CD8-positive, alpha-beta T cell (primary cell): ENCODE measurements at regions of chr1 and their contacts with region 1.

Region 1: DNA sequence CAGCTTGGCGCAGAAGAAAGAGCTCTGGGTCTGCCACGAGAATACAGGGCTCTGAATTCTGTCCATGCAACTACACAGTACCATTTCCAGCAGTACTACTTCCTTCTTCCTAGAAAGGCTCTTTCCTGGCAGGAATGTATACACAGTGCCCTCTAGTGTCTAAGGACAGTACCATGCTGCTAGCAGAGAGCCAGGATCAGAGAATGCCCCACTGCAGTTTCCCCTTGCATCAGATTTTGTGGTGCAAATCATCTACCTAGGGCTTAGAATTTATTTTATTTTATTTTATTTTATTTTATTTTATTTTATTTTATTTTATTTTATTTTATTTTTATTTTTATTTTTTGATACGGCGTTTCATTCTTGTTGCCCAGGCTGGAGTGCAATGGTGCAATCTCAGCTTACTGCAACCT is 50.8 kb downstream of the PAX7 start:
- DNase-seq: peak in 3 of 9 experiments; percentile 16 to 53 (median 17)
- ATAC-seq: no peak
- H3K4me3 ChIP-seq: no peak overlapping the region
- H3K4me3 Mint-ChIP-seq: no peak overlapping the region
- H3K27ac ChIP-seq: no peak overlapping the region
- H3K27ac Mint-ChIP-seq: no peak overlapping the region
- H3K4me1 ChIP-seq: no peaks in the 10 kb centered on the region
- H3K4me1 Mint-ChIP-seq: peaks cover 7% of the 10 kb centered on the region
- H3K27me3 ChIP-seq: peaks cover 0 to 2% of the 10 kb centered on the region in 2 experiments
- H3K27me3 Mint-ChIP-seq: peaks cover 15% of the 10 kb centered on the region
- CTCF ChIP-seq: peak; percentile 62

Region 2: DNA sequence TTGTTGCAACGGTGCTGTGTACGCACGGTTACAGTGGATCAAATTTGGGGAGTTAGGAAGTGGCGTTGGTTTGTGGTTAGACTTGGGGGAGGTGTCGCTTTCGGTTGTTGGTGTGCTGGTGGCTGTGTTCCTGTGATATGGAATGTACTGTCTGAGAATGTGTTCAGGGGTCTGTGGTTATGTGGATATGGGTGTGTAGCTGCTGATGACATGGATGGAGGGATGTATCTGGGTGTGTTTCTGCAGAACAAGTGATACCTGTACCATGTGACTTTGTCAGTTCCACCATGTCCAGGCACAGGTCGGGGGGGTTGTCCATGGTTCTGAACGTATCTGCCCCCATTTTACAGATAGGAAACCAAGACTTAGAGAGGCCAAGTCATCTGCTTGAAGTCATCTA is 28.1 kb before region 1 on chr1:
- CTCF ChIA-PET with region 1: interaction called, 12 read pairs
- POLR2A ChIA-PET with region 1: no interaction called
- intact Hi-C with region 1: no loop called
- DNase-seq: peak in 1 of 9 experiments; percentile 30
- ATAC-seq: peak; percentile 37
- H3K4me3 ChIP-seq: peak overlapping the region in 1 of 2 experiments; percentile 26
- H3K4me3 Mint-ChIP-seq: peak overlapping the region; percentile 64
- H3K27ac ChIP-seq: no peak overlapping the region
- H3K27ac Mint-ChIP-seq: no peak overlapping the region
- H3K4me1 ChIP-seq: peaks cover 53% of the 10 kb centered on the region
- H3K4me1 Mint-ChIP-seq: peaks cover 70% of the 10 kb centered on the region
- H3K27me3 ChIP-seq: peaks cover 4 to 6% of the 10 kb centered on the region in 2 experiments
- H3K27me3 Mint-ChIP-seq: peaks cover 18% of the 10 kb centered on the region
- CTCF ChIP-seq: no peak

Region 3: DNA sequence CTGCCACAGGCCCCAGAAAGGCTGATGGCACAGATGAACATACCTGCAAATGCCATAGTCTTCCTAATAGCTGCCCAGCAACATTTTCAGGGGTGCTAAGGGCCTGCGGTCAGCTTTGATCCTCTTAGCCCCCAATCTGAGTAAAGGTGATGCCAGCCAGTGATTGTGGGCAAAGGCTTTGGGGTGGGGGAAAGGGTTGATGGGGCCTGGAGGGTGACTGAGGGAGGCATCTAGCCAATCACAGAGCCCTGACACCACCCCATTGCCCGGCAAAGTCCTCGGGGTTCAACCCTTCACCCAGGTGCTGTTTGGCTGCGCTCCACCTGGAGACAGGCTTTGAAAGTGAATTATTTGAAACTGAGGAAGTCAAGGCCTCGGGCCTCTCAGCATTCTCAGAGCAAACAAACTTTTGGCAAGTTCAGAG is 15.0 kb before region 1 on chr1:
- CTCF ChIA-PET with region 1: interaction called, 18 read pairs
- POLR2A ChIA-PET with region 1: no interaction called
- intact Hi-C with region 1: no loop called
- DNase-seq: no peak
- ATAC-seq: no peak
- H3K4me3 ChIP-seq: no peak overlapping the region
- H3K4me3 Mint-ChIP-seq: peak overlapping the region; percentile 37
- H3K27ac ChIP-seq: no peak overlapping the region
- H3K27ac Mint-ChIP-seq: peak overlapping the region; percentile 22
- H3K4me1 ChIP-seq: peaks cover 17% of the 10 kb centered on the region
- H3K4me1 Mint-ChIP-seq: peaks cover 24% of the 10 kb centered on the region
- H3K27me3 ChIP-seq: peaks cover 0 to 4% of the 10 kb centered on the region in 2 experiments
- H3K27me3 Mint-ChIP-seq: no peaks in the 10 kb centered on the region
- CTCF ChIP-seq: no peak

Region 4: GRCh38 chr1:18783705-18784481 is 102.5 kb after region 1 on chr1:
- CTCF ChIA-PET with region 1: no interaction called
- POLR2A ChIA-PET with region 1: no interaction called
- intact Hi-C with region 1: no loop called
- DNase-seq: no peak
- ATAC-seq: no peak
- H3K4me3 ChIP-seq: no peak overlapping the region
- H3K4me3 Mint-ChIP-seq: no peak overlapping the region
- H3K27ac ChIP-seq: no peak overlapping the region
- H3K27ac Mint-ChIP-seq: no peak overlapping the region
- H3K4me1 ChIP-seq: no peaks in the 10 kb centered on the region
- H3K4me1 Mint-ChIP-seq: no peaks in the 10 kb centered on the region
- H3K27me3 ChIP-seq: peaks cover 0 to 5% of the 10 kb centered on the region in 2 experiments
- H3K27me3 Mint-ChIP-seq: peaks cover 27% of the 10 kb centered on the region
- CTCF ChIP-seq: no peak

Region 5: GRCh38 chr1:18820791-18821641 is 139.6 kb after region 1 on chr1:
- CTCF ChIA-PET with region 1: interaction called, 3 read pairs
- POLR2A ChIA-PET with region 1: no interaction called
- intact Hi-C with region 1: loop called in 1 of 2 experiments (anchors 5 kb)
- DNase-seq: peak; percentile 28 to 73 (median 57)
- ATAC-seq: peak; percentile 29
- H3K4me3 ChIP-seq: no peak overlapping the region
- H3K4me3 Mint-ChIP-seq: no peak overlapping the region
- H3K27ac ChIP-seq: no peak overlapping the region
- H3K27ac Mint-ChIP-seq: no peak overlapping the region
- H3K4me1 ChIP-seq: no peaks in the 10 kb centered on the region
- H3K4me1 Mint-ChIP-seq: no peaks in the 10 kb centered on the region
- H3K27me3 ChIP-seq: peaks cover 0 to 7% of the 10 kb centered on the region in 2 experiments
- H3K27me3 Mint-ChIP-seq: peaks cover 53% of the 10 kb centered on the region
- CTCF ChIP-seq: peak; percentile 77

Region 6: GRCh38 chr1:19169642-19170041 is 488.2 kb after region 1 on chr1:
- CTCF ChIA-PET with region 1: no interaction called
- POLR2A ChIA-PET with region 1: no interaction called
- intact Hi-C with region 1: no loop called
- DNase-seq: no peak
- ATAC-seq: no peak
- H3K4me3 ChIP-seq: no peak overlapping the region
- H3K4me3 Mint-ChIP-seq: no peak overlapping the region
- H3K27ac ChIP-seq: no peak overlapping the region
- H3K27ac Mint-ChIP-seq: no peak overlapping the region
- H3K4me1 ChIP-seq: no peaks in the 10 kb centered on the region
- H3K4me1 Mint-ChIP-seq: no peaks in the 10 kb centered on the region
- H3K27me3 ChIP-seq: no peaks in the 10 kb centered on the region
- H3K27me3 Mint-ChIP-seq: no peaks in the 10 kb centered on the region
- CTCF ChIP-seq: no peak